Activated T-helper 1 cell treated with anti-CD3 and anti-CD28 coated beads, Interleukin-12 subunit alpha, Interleukin-12 subunit beta, Interleukin-2, Interleukin-4 antibody, amounts not matched to agents 30 ng/mL and 10 ng/mL and 1 ng/mL, durations not matched to agents 14 hours and 24 hours and 36 hours (primary cell): ENCODE measurements at regions of chr3 and their contacts with region 1.

Region 1: DNA sequence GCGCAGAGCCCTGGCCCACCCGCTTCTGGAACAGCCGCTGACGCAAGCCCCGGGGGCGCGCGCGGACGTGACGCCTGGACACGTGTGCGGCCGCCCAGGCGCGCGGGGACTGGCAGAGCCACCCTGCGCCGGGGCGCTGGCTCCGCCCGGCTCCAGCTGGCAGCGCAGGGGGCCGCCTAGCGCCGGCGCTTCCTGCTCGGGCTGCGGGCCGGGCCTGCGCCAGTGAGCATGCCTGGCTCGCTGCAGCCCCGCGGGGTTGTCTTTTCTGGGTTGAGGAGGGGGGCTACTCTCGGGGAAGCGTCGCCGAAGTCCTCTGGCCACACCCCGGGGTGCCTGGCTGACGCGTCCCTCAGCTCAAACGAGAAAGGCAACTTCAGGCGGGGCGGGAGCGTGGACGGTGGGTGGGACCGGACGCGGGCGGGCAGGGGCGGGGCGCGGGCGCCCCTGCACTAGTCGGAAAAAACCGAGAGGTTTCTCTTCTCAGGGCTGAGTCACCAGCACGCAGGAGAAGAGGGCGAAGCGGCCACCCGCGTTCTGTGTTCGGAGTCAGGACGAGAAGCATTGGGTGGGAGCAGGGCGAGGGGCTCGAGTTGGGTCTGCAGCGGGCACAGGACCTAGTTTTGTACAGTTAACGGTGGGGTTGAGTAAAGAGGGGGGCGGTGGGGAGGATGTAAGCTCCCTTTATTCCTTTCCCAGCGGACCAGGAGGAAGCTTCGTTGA is at the start of gene SIAH2:
- DNase-seq: peak; percentile 90
- H3K4me3 Mint-ChIP-seq: peak within 1 kb of the TSS; percentile 99
- H3K27ac Mint-ChIP-seq: peak within 1 kb of the TSS; percentile 100
- H3K4me1 Mint-ChIP-seq: peaks cover 64% of the 10 kb centered on the region
- H3K27me3 Mint-ChIP-seq: no peaks in the 10 kb centered on the region
- total RNA-seq, gene SIAH2: 175 and 177 TPM in 2 replicates

Region 2: DNA sequence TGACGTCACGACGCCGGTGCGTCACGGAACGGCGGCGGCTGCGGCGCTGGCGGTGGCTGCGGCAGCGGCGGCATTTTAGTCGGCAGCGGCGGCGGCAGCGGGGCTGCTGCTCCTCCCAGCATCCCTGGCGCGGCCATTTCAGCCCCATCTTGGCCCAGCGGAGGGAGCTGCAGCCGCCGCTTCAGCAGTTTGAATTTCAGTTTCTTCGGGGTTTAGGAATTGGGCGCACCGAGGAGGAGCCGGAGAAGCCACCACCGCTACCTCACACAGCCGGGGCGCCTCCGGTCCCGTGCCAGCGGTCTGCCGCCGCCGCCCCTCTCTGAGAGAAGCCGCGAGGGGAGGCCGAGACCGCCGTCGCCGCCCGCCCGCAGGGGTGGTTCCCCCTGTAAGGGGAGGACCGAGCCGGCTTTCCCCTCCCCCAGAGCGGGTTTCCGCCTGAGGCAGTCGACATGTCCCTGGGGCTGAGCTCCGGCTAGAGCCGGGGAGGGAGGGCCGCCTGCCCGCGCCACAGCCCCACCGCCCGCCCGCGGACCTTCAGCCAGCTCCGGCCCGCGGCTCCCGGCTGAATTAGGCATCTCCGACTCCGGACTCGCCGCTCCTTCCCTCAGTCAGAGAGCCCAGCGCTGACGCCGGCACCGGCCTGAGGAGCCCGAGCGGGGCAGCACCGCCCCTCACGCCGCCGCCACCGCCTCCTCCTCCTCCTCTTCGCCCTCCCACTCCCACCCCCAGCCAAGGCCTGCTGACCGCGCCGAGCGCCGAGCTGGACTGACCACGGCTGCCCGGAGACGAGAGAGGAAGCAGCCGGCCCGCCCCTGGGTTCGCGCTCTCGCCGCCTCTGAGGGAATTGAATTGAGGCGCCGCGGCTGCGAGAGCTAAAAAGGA is 354.8 kb before region 1 on chr3 and contains the start of gene TSC22D2:
- intact Hi-C with region 1: loop called (anchors 1 kb)
- DNase-seq: peak; percentile 92
- H3K4me3 Mint-ChIP-seq: peak within 1 kb of the TSS; percentile 83
- H3K27ac Mint-ChIP-seq: peak within 1 kb of the TSS; percentile 95
- H3K4me1 Mint-ChIP-seq: peaks cover 40% of the 10 kb centered on the region
- H3K27me3 Mint-ChIP-seq: peaks cover 6% of the 10 kb centered on the region
- total RNA-seq, gene TSC22D2: 21.3 and 22.7 TPM in 2 replicates

Region 3: GRCh38 chr3:150721285-150722130 is 41.8 kb before region 1 on chr3:
- intact Hi-C with region 1: loop called (anchors 1 kb)
- DNase-seq: no peak
- H3K4me3 Mint-ChIP-seq: no peak overlapping the region
- H3K27ac Mint-ChIP-seq: no peak overlapping the region
- H3K4me1 Mint-ChIP-seq: peaks cover 46% of the 10 kb centered on the region
- H3K27me3 Mint-ChIP-seq: no peaks in the 10 kb centered on the region

Region 4: GRCh38 chr3:150787741-150788370 is 24.6 kb after region 1 on chr3:
- intact Hi-C with region 1: loop called (anchors 1 kb)
- DNase-seq: peak; percentile 61
- H3K4me3 Mint-ChIP-seq: peak overlapping the region; percentile 43
- H3K27ac Mint-ChIP-seq: no peak overlapping the region
- H3K4me1 Mint-ChIP-seq: peaks cover 52% of the 10 kb centered on the region
- H3K27me3 Mint-ChIP-seq: peaks cover 6% of the 10 kb centered on the region

Region 5: DNA sequence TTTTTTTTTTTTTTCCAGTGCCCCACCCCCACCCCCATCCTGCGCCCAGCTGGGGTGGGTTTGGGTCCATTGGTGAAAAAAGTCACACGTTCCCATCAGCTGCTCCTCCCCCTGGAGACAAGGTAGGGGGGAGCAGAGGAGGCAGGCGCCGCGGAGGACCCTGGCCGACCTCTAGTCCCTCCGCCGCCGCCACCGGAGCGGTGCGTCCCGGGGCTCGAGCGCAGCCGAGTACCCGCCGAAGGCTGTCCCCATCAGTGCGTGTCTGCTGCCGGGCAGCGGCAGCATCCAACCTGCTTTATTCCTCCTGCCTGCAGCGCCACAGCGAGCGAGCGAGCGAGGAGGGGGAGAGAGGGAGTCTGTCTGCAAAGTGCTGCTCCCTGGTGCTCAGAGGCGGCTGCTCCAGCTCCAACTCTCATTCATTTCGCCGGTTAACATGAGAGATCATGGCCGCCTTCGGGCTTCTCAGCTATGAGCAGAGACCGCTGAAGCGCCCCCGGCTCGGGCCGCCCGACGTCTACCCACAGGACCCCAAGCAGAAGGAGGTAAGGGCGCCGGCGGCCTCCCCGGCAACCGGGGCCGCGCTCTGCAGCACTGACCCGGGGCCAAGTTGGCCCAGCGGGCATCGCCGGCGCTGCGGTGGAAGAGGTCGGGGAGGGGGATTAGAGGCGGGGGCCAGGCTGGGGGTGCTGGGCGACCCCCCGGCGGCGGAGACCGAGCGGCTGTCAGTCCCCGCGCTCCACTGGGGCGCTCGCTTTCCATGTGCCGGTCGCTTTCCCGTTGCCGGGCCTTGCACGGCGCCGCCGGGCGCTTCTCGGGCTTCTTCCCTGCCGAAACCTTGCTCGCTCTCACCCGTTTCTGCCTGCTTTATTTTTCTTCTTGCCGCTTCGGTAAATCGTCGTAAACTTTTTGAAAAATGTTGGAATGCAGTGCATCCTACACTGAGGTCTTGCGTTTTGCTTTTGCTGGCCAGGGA is 323.5 kb after region 1 on chr3:
- intact Hi-C with region 1: loop called (anchors 1 kb)
- DNase-seq: peak; percentile 58
- H3K4me3 Mint-ChIP-seq: peak overlapping the region; percentile 85
- H3K27ac Mint-ChIP-seq: peak overlapping the region; percentile 27
- H3K4me1 Mint-ChIP-seq: peaks cover 4% of the 10 kb centered on the region
- H3K27me3 Mint-ChIP-seq: peaks cover 48% of the 10 kb centered on the region

Region 6: DNA sequence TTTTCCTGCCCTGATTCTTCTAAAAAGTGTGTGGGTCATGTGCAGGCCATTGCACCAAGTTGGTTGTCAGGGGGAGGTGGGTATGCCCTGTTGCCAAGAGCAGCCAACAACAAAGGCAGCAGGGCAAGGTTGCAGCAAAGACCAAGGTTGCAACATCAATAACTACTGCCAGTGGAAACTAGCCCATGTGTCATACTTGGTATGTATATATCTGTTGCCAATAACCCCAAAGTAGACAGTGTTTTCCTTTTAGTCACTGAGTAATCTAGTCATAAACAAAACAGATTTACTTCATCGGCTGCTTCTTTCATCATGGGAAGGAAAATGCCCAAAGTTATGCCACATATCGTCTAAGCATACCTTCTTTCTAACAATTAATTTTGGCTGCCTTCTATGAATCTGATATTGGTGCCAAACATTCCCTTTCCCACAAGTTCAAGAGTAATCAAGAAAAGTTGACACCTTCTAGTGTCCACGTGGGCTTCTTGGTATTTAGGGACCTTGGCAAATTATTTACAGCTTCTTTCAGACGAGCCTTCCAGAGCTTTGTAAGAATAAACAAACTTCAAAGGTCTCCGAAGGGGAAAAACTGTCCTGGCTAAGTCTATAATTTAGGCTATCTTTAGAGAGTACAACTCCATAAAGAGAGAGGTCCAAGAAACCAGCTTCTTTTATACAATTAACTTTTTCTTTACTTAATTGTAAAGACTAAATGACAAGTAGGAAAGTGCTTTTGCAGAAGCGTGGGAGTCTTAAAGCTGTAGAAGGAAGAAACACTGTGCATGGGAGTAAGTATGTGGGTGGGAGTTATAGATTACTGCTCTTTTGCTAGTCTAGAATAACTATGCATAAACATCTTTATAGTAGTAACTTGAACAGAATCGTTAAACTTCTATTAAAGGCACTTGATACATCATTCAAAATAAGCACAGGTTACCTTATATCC is 1495.4 kb after region 1 on chr3:
- intact Hi-C with region 1: loop called (anchors 1 kb)
- DNase-seq: peak; percentile 62
- H3K4me3 Mint-ChIP-seq: peak overlapping the region; percentile 81
- H3K27ac Mint-ChIP-seq: peak overlapping the region; percentile 98
- H3K4me1 Mint-ChIP-seq: peaks cover 90% of the 10 kb centered on the region
- H3K27me3 Mint-ChIP-seq: no peaks in the 10 kb centered on the region

Region 7: GRCh38 chr3:152524198-152525140 is 1761.2 kb after region 1 on chr3:
- intact Hi-C with region 1: no loop called
- DNase-seq: no peak
- H3K4me3 Mint-ChIP-seq: no peak overlapping the region
- H3K27ac Mint-ChIP-seq: no peak overlapping the region
- H3K4me1 Mint-ChIP-seq: no peaks in the 10 kb centered on the region
- H3K27me3 Mint-ChIP-seq: peaks cover 15% of the 10 kb centered on the region